GM13976 (cell line): ENCODE measurements at regions of chr13 and their contacts with region 1.

Region 1: GRCh38 chr13:46721054-46721453 is 75.9 kb downstream of the ESD start:
- DNase-seq: no peak
- CTCF ChIP-seq: peak; percentile 53

Region 2: GRCh38 chr13:46492946-46493345 is 228.1 kb before region 1 on chr13:
- in situ Hi-C with region 1: loop called (anchors 10 kb)
- DNase-seq: peak; percentile 49
- CTCF ChIP-seq: peak; percentile 42

Region 3: DNA sequence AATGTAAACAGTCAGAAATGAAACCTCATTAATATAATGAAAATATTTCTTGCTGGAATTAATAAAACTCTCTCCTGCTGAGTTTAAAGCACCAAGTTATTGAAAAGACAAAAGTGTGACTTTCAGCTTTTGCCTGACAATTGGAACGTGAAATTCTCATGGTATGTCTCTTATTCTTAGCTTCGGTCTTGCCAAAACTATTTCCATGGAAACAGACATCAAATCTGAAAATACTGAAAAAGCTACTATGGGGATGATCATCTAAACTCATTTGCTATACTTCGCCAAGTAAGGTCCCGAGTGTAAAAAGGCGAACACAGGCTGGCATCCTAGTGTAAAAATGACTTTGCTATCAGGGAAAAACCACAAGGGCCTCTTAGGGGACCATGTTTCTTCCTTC is 153.0 kb after region 1 on chr13:
- in situ Hi-C with region 1: no loop called
- DNase-seq: no peak
- CTCF ChIP-seq: no peak